WTC11 (cell line): ENCODE measurements at regions of chr11 and their contacts with region 1.

Region 1: GRCh38 chr11:61899146-61899841 is 7.9 kb upstream of the FADS3 start:
- DNase-seq: peak; percentile 98
- ATAC-seq: peak; percentile 80
- H3K4me3 Mint-ChIP-seq: no peak overlapping the region
- H3K27ac Mint-ChIP-seq: no peak overlapping the region
- H3K4me1 Mint-ChIP-seq: peaks cover 20% of the 10 kb centered on the region
- H3K27me3 Mint-ChIP-seq: no peaks in the 10 kb centered on the region
- CTCF ChIP-seq: peak; percentile 100

Region 2: GRCh38 chr11:61834278-61835048 is 64.8 kb before region 1 on chr11:
- CTCF ChIA-PET with region 1: interaction called, 14 read pairs
- POLR2A ChIA-PET with region 1: no interaction called
- DNase-seq: peak; percentile 49
- ATAC-seq: peak; percentile 87
- H3K4me3 Mint-ChIP-seq: no peak overlapping the region; the same call in 1 of the 2 replicates
- H3K27ac Mint-ChIP-seq: peak overlapping the region; percentile 98
- H3K4me1 Mint-ChIP-seq: peaks cover 70% of the 10 kb centered on the region
- H3K27me3 Mint-ChIP-seq: no peaks in the 10 kb centered on the region
- CTCF ChIP-seq: no peak

Region 3: DNA sequence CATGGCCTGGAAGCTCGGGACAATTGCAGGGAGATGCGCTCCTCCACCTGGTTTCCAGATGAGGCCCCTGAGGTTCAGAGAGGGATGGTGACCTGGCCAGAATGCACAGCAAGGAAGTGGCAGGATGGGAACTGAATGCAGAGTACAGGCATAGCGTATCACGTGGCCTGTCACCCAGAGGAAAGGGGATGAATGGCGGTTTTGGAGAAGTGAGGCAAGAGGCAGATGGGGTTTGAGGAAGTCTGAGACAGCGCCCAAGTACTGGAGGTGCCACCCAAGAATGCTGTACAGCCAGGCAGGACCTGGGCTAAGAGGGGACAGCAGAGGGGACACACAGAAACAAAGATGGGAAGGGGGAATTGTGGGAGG is 13.2 kb after region 1 on chr11:
- CTCF ChIA-PET with region 1: interaction called, 99 read pairs
- POLR2A ChIA-PET with region 1: no interaction called
- DNase-seq: peak; percentile 2
- ATAC-seq: no peak
- H3K4me3 Mint-ChIP-seq: no peak overlapping the region
- H3K27ac Mint-ChIP-seq: no peak overlapping the region; the same call in 1 of the 2 replicates
- H3K4me1 Mint-ChIP-seq: peaks cover 19% of the 10 kb centered on the region
- H3K27me3 Mint-ChIP-seq: peaks cover 17% of the 10 kb centered on the region
- CTCF ChIP-seq: no peak

Region 4: GRCh38 chr11:61940466-61940865 is 41.2 kb after region 1 on chr11:
- CTCF ChIA-PET with region 1: interaction called, 685 read pairs
- POLR2A ChIA-PET with region 1: interaction called, 3 read pairs
- DNase-seq: no peak
- ATAC-seq: no peak
- H3K4me3 Mint-ChIP-seq: no peak overlapping the region
- H3K27ac Mint-ChIP-seq: no peak overlapping the region
- H3K4me1 Mint-ChIP-seq: no peaks in the 10 kb centered on the region
- H3K27me3 Mint-ChIP-seq: peaks cover 9% of the 10 kb centered on the region
- CTCF ChIP-seq: no peak

Region 5: DNA sequence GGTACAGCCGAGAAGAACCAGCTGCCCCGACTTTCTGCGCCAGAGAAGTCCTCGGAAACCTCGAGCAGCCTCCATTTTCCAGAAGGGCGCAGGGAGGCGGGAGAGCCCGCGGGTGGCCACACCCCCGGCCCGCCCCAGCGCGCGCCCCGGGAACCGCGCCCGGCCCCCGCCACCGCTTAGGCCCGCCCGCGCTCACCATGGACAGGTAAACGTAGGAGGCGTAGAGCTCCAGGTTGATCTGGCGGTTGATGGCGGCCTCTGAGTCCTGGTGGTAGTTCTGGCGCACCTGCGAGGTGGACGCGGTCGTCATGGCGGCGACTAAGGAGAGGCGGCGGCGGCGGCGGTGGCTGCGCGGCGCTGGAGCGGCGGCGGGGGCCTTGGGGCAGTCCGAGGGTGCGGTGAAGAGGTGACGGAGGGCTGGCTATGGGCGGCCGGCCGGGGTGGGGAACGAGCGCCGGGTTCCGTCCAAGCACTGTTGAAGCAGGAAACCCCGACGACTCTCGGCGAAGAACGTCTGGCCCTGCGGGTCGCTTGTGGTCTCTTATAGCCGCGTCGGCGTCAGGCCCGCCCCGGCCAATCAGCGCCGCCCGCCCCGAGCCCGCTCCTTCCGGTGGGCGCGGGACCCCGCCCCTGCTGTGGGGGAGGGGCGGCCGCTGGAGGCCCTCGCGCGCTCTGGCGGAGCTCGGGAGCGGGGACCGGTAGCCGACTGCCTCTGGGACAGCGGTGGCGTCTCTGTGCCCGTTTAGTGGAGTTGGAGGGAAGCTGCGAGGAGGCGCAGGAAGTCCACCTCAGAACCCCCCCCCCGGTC is 68.0 kb after region 1 on chr11 and contains the start of gene FTH1:
- CTCF ChIA-PET with region 1: interaction called, 20 read pairs
- POLR2A ChIA-PET with region 1: interaction called, 5 read pairs
- DNase-seq: peak; percentile 85
- ATAC-seq: peak; percentile 76
- H3K4me3 Mint-ChIP-seq: peak within 1 kb of the TSS; percentile 94
- H3K27ac Mint-ChIP-seq: peak within 1 kb of the TSS; percentile 80
- H3K4me1 Mint-ChIP-seq: peaks cover 42% of the 10 kb centered on the region
- H3K27me3 Mint-ChIP-seq: no peaks in the 10 kb centered on the region; the same call in 1 of the 2 replicates
- CTCF ChIP-seq: no peak
- total RNA-seq, gene FTH1: 1,108 to 1,272 TPM (median 1,247 TPM) in 3 replicates

Region 6: GRCh38 chr11:62030071-62030684 is 130.9 kb after region 1 on chr11:
- CTCF ChIA-PET with region 1: interaction called, 10 read pairs
- POLR2A ChIA-PET with region 1: no interaction called
- DNase-seq: peak; percentile 43
- ATAC-seq: peak; percentile 94
- H3K4me3 Mint-ChIP-seq: no peak overlapping the region
- H3K27ac Mint-ChIP-seq: peak overlapping the region; percentile 77
- H3K4me1 Mint-ChIP-seq: peaks cover 31% of the 10 kb centered on the region
- H3K27me3 Mint-ChIP-seq: peaks cover 6% of the 10 kb centered on the region; the same call in 1 of the 2 replicates
- CTCF ChIP-seq: no peak

Region 7: GRCh38 chr11:62108017-62108750 is 208.9 kb after region 1 on chr11:
- CTCF ChIA-PET with region 1: interaction called, 136 read pairs
- POLR2A ChIA-PET with region 1: no interaction called
- DNase-seq: no peak
- ATAC-seq: peak; percentile 70
- H3K4me3 Mint-ChIP-seq: no peak overlapping the region
- H3K27ac Mint-ChIP-seq: no peak overlapping the region
- H3K4me1 Mint-ChIP-seq: peaks cover 14% of the 10 kb centered on the region
- H3K27me3 Mint-ChIP-seq: peaks cover 4% of the 10 kb centered on the region; the same call in 1 of the 2 replicates
- CTCF ChIP-seq: peak; percentile 62